ENCODE measurements at regions of chr3 and their contacts with region 1.

Region 1: DNA sequence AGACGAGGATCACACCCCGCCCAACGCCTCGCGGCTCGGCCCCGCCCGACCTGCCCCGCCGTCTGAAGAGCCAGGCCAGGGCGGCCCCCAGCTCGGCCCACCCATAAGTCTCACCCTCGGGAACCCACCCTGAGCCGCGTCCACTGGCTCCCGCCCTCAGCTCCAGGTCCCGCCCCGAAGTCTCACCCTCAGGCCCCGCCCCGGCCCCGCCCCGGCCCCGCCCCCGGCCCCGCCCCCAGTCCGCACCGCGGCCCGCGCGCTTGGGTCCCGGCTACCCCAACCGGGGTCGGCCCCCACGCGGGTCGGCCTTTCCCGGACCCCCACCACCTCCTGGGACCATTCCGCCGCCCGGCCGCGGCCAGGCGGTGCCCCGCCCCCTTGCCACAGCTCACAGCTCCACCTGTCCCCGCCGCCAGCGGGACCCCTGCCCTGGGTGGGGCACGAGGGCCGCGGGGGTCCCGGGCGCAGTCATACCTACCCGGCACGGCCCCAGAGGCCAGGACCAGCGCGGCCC is 489 bp downstream of the CSPG5 start:
- DNase-seq: peak in 9 of 10 donors; percentile 16 to 90 (median 52)

Region 2: DNA sequence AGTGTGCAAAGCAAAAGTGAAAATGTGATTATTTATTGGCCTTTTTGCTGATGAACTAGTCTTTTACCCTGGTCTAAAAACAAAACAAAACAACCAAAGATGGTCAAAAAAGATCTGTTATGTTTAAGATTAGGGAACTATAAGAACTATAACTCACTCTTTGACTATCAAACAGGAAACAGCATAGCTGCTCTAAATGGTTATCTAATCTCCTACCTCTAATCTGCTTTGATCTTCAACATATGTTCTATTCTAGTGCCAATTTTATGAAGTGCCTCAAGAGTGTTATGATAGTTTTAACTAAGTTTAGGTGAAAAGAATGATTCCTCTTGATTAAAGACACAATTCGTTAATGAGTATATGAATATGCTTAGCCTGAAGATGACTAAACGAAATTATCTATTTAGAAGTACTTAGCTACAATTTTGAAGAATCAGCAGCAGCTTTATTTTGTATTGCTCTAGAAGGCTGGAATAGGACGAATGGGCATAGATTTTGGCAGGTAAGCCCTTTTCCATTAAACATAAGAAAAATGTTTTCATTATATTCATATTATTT is 460.3 kb before region 1 on chr3:
- intact Hi-C with region 1: no loop called
- DNase-seq: no peak

Region 3: GRCh38 chr3:47210863-47211405 is 367.2 kb before region 1 on chr3:
- intact Hi-C with region 1: no loop called
- DNase-seq: peak in 1 of 10 donors; percentile 5

Region 4: GRCh38 chr3:47781685-47782445 is 203.7 kb after region 1 on chr3 and contains the start of gene SMARCC1:
- intact Hi-C with region 1: loop called (anchors 5 kb)
- DNase-seq: peak; percentile 94 to 99 (median 97)

Region 5: DNA sequence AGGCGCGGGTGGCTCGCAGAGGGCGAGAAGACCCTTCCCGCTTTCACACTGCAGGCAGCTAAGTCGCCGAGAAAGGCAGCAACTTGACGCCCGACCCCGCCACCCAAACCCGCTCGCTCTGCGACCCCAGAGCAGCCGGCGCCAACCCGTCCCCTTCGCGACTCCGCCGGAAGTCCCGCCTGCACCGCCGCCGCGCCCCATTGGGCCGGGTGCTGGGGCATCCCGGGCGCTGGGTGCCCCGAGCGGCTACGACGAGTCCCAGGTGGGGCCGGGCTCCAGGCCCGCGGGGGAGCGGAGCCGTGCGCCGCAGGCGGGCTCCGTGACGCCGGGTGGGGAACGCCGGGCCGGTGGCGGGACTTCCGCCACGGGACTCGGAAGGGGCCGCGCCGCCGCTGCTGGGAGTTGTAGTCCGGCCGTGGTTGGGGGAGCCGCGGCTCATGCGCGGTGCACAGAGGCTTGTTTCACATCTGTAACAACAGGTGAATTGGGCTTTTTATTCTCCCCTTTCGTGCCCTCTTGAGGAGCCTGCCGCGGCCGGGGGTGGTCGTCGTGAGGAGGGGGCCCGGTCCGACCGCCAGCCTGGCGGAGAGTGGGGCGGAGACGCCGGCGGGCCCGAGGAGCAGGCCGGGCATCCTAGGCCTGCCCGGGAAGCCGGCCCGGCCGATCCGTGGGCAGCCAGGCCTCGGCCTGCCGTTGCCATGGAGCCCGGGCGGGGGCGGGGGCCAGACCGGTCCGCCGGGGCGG is 224.7 kb after region 1 on chr3 and contains the start of gene DHX30:
- intact Hi-C with region 1: no loop called
- DNase-seq: peak; percentile 83 to 98 (median 90)